OCI-LY7 (cell line): ENCODE measurements at regions of chr2 and their contacts with region 1.

Region 1: DNA sequence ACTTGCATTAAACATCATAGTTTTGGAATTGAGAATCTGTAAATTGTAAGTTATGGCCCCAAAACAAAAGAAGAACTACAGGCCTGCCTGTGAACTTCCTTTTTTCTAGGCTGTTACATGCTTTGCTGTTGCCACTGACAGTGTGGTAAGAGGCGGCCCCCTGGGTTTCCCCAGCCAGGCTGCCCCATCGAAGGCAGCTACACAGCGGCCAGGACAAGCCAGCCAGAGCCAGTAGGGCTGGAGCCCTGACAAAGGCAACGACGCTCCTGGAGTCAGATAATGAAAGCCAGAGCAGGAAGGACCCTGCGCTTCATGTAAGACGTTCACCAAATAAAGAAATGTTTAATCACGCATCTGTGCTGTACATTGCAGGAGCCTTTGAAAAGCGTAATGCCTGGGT is 55.0 kb downstream of the ANKRD44 start:
- DNase-seq: peak; percentile 91
- H3K4me3 ChIP-seq: peak overlapping the region; percentile 60
- H3K27ac ChIP-seq: peak overlapping the region; percentile 90
- H3K4me1 ChIP-seq: peaks cover 63% of the 10 kb centered on the region
- CTCF ChIP-seq: no peak

Region 2: GRCh38 chr2:196551028-196551427 is 704.5 kb before region 1 on chr2:
- CTCF ChIA-PET with region 1: no interaction called
- POLR2A ChIA-PET with region 1: no interaction called
- intact Hi-C with region 1: no loop called
- DNase-seq: no peak
- H3K4me3 ChIP-seq: no peak overlapping the region
- H3K27ac ChIP-seq: no peak overlapping the region
- H3K4me1 ChIP-seq: no peaks in the 10 kb centered on the region
- CTCF ChIP-seq: no peak

Region 3: GRCh38 chr2:197198890-197199289 is 56.7 kb before region 1 on chr2:
- CTCF ChIA-PET with region 1: no interaction called
- POLR2A ChIA-PET with region 1: interaction called, 5 read pairs
- intact Hi-C with region 1: loop called (anchors 2 kb)
- DNase-seq: peak; percentile 97
- H3K4me3 ChIP-seq: peak overlapping the region; percentile 53
- H3K27ac ChIP-seq: peak overlapping the region; percentile 81
- H3K4me1 ChIP-seq: peaks cover 63% of the 10 kb centered on the region
- CTCF ChIP-seq: no peak

Region 4: GRCh38 chr2:197216361-197216979 is 39.1 kb before region 1 on chr2:
- CTCF ChIA-PET with region 1: no interaction called
- POLR2A ChIA-PET with region 1: interaction called, 9 read pairs
- intact Hi-C with region 1: loop called (anchors 1 kb)
- DNase-seq: peak; percentile 76
- H3K4me3 ChIP-seq: peak overlapping the region; percentile 45
- H3K27ac ChIP-seq: peak overlapping the region; percentile 96
- H3K4me1 ChIP-seq: peaks cover 71% of the 10 kb centered on the region
- CTCF ChIP-seq: no peak

Region 5: GRCh38 chr2:197239434-197239833 is 16.1 kb before region 1 on chr2:
- CTCF ChIA-PET with region 1: interaction called, 3 read pairs
- POLR2A ChIA-PET with region 1: interaction called, 46 read pairs
- intact Hi-C with region 1: loop called (anchors 1 kb)
- DNase-seq: no peak
- H3K4me3 ChIP-seq: peak overlapping the region; percentile 47
- H3K27ac ChIP-seq: no peak overlapping the region
- H3K4me1 ChIP-seq: peaks cover 57% of the 10 kb centered on the region
- CTCF ChIP-seq: no peak

Region 6: DNA sequence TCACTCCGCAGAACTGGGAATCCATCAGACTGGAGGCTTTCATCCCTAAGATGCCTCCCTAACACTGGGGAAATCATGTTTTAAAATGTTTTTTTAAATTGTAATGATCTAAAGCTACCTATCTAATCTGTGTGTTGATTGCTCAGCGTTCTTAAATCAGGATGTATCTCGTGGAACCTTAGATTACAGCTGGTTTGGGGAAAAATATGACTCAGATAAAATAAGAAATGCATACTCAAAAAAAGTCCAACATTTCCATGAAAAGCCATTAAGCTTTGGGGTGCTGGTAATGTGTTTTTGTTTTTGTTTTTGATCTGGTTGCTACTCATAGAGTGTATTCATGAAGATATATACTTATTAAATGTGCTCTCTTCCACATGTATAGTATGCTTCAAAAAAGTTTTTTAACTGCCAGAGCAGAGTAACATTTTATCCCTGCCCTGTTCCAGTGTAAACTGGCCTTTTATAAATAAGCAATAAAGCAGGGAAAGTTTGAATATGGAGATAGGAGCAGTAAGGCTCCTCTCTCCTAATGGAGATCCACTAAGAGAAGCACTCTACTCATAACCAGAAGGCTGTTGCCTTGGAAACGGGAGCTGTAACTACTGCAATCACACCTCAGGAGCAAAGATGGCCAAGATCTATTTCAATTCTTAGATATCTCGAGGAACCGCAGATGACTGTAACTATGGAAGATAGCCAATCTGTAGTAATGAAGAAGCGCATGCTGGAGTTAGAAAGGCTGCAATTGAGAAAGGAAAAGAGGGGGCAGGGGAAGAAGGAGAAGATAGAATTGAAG is 13.4 kb after region 1 on chr2:
- CTCF ChIA-PET with region 1: interaction called, 4 read pairs
- POLR2A ChIA-PET with region 1: interaction called, 19 read pairs
- intact Hi-C with region 1: no loop called
- DNase-seq: no peak
- H3K4me3 ChIP-seq: no peak overlapping the region
- H3K27ac ChIP-seq: no peak overlapping the region
- H3K4me1 ChIP-seq: peaks cover under 1% of the 10 kb centered on the region
- CTCF ChIP-seq: no peak

Region 7: GRCh38 chr2:197293252-197294007 is 37.9 kb after region 1 on chr2:
- CTCF ChIA-PET with region 1: no interaction called
- POLR2A ChIA-PET with region 1: interaction called, 11 read pairs
- intact Hi-C with region 1: loop called (anchors 1 kb)
- DNase-seq: peak; percentile 79
- H3K4me3 ChIP-seq: peak overlapping the region; percentile 64
- H3K27ac ChIP-seq: peak overlapping the region; percentile 91
- H3K4me1 ChIP-seq: peaks cover 69% of the 10 kb centered on the region
- CTCF ChIP-seq: no peak

Region 8: DNA sequence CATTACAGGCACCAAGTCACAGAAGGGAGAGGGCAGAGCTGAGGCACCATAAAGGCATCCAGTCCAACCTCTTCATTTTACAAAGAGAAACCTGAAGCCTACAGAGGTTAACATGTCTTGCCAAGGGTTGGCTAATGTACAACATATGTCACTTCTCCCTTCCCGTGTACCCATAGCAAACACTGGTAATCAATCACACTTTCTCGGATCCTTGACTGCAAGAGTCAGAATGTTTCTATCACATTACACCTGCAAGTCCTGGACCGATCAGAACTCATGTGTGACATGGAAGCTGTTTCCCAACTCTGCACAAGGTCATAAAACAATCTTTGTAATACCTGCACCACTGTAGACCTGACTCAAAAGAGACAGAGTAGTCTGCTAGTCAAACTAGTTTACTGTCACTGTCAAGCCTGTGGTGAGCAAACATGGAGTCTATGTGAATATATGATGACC is 49.0 kb after region 1 on chr2:
- CTCF ChIA-PET with region 1: interaction called, 7 read pairs
- POLR2A ChIA-PET with region 1: interaction called, 11 read pairs
- intact Hi-C with region 1: loop called (anchors 1 kb)
- DNase-seq: peak; percentile 26
- H3K4me3 ChIP-seq: peak overlapping the region; percentile 50
- H3K27ac ChIP-seq: peak overlapping the region; percentile 83
- H3K4me1 ChIP-seq: peaks cover 88% of the 10 kb centered on the region
- CTCF ChIP-seq: no peak

Region 9: DNA sequence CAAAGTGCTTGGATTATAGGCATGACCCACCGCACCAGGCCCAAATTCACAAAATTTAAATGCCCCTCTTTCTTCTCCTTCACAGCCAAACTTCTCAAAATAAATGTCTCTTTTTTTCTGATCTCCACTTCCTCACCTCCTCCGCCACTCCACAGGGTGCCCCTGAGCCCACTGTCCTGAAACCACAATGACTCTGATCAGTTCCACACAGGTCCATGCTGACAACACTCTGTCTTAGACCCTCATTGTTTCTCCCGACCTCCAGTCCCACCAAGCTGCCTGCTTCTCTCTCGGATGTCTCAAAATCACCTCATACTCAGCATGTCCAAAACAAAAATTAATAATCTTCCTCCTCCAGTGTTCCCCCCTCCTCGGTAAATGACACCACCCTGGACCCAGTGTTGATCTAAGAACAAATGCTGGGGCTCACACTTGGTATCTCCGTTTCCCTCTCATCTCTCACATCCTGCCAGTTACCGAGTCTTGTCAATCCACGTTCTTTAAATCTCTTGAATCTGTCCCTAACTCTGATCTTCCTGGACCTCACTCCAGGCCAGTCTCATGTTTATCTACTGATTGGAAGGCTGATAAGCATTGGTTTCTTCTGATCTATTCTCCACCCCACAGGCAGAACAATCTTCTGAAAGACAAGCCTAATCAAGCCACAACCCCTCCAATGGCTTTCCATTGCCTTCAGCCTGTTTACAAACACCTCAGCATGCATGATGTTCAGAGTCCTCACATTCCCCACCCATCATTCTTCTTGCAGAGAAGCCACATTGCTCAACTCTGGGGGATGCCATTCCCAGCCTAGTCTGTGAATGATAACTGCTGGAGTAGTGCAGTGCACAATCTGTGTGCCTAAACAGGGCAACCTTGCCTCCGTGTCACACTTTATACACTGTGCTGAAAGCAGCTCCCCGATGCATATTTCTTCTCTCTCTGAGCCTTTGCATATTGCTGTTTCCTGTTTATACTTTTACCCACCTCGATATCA is 67.5 kb after region 1 on chr2:
- CTCF ChIA-PET with region 1: no interaction called
- POLR2A ChIA-PET with region 1: no interaction called
- intact Hi-C with region 1: no loop called
- DNase-seq: no peak
- H3K4me3 ChIP-seq: no peak overlapping the region
- H3K27ac ChIP-seq: no peak overlapping the region
- H3K4me1 ChIP-seq: peaks cover 8% of the 10 kb centered on the region
- CTCF ChIP-seq: no peak